ENCODE measurements at regions of chr14 and their contacts with region 1.

Region 1: GRCh38 chr14:60184146-60184904 is 19.1 kb upstream of the DHRS7 start:
- DNase-seq: no peak
- H3K4me3 ChIP-seq: peak overlapping the region; percentile 27
- H3K27ac ChIP-seq: peak overlapping the region in 1 of 2 donors; percentile 19
- H3K4me1 ChIP-seq: no peaks in the 10 kb centered on the region
- H3K27me3 ChIP-seq: no peaks in the 10 kb centered on the region
- CTCF ChIP-seq: peak; percentile 64 to 89 (median 85)
- EP300 ChIP-seq: no peak
- POLR2A ChIP-seq: no peak

Region 2: DNA sequence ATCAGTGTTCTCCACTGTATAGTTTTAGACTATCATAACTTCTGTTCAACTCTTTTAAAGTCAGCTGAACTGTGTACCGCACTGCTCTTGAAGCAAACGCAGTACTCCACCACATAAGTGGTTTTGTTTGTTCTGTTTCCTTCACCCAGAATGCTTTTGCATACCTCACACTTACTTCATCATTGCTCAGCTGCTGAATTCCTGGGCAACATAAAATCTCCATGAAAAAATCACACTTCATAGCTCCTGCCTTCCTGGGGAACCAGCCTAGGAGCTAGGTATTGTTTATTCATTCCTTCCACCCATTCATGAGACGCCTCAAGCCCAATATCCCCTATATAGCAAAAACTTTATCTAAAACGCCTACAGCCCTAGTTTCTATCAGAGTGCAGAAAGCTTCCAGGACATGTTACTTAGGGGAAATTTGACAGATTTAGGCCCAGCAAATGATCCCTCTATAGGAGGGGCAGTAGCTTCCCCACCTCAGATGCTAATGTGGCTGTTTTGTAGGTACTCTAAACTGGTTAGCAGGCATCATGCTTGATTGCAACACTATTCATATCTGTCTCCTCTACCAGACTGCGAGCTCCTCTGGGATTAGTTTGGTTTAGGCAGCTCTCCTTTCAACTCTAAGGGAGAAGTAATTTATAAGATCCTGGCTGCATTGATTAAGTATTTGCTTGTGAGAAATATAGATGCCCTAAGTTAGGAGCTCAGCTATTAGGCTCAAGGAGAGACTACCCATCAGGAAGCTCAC is 219.9 kb before region 1 on chr14:
- intact Hi-C with region 1: loop called in 3 of 4 experiments (anchors 5 to 10 kb)
- DNase-seq: no peak
- H3K4me3 ChIP-seq: no peak overlapping the region
- H3K27ac ChIP-seq: no peak overlapping the region
- H3K4me1 ChIP-seq: no peaks in the 10 kb centered on the region
- H3K27me3 ChIP-seq: no peaks in the 10 kb centered on the region
- CTCF ChIP-seq: no peak
- EP300 ChIP-seq: no peak
- POLR2A ChIP-seq: no peak

Region 3: GRCh38 chr14:60064491-60065072 is 119.7 kb before region 1 on chr14:
- intact Hi-C with region 1: loop called in 3 of 4 experiments (anchors 5 to 10 kb)
- DNase-seq: no peak
- H3K4me3 ChIP-seq: no peak overlapping the region
- H3K27ac ChIP-seq: no peak overlapping the region
- H3K4me1 ChIP-seq: no peaks in the 10 kb centered on the region
- H3K27me3 ChIP-seq: peaks cover 3% of the 10 kb centered on the region
- CTCF ChIP-seq: peak in 2 of 3 donors; percentile 43 to 58
- EP300 ChIP-seq: no peak
- POLR2A ChIP-seq: no peak